ENCODE measurements at regions of chr3 and their contacts with region 1.

Region 1: DNA sequence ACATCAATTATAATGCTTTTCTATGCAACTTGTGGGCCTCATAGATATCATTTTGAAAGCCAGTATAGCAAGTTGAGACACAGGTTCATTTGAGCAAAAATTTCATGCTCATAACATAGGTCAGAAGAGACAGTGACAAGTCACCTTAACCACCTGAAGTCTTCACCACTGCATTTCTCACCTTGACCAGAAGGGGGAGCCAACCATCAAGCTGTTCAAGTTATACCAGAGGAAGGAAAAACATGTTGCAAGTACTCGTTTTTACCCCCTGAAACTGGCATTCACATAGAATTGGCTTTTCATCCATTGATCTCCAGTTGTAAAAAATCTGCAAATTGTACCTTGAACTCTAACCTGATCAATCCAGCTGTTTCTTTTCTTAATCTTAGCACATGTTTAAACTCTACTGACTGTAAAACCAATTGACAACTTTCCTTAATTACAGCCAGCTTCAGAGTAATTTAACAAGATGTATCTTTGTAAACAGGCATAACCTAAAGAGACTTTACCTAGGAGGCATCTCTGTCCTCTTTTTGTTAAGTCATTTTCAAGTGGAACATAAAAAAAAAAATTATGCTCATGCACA is 1.4 kb downstream of the LMOD3 start:
- DNase-seq: peak; percentile 95
- H3K4me3 Mint-ChIP-seq: no peak overlapping the region
- H3K27ac Mint-ChIP-seq: no peak overlapping the region
- H3K4me1 Mint-ChIP-seq: peaks cover 3% of the 10 kb centered on the region
- H3K27me3 Mint-ChIP-seq: no peaks in the 10 kb centered on the region

Region 2: GRCh38 chr3:69425261-69425660 is 304.3 kb after region 1 on chr3:
- CTCF ChIA-PET with region 1: interaction called, 13 read pairs
- intact Hi-C with region 1: loop called (anchors 1 kb)
- DNase-seq: peak; percentile 57
- H3K4me3 Mint-ChIP-seq: no peak overlapping the region
- H3K27ac Mint-ChIP-seq: no peak overlapping the region
- H3K4me1 Mint-ChIP-seq: peaks cover 5% of the 10 kb centered on the region
- H3K27me3 Mint-ChIP-seq: no peaks in the 10 kb centered on the region

Region 3: GRCh38 chr3:69671082-69671952 is 550.3 kb after region 1 on chr3:
- CTCF ChIA-PET with region 1: interaction called, 4 read pairs
- intact Hi-C with region 1: loop called (anchors 1 kb)
- DNase-seq: peak; percentile 30
- H3K4me3 Mint-ChIP-seq: no peak overlapping the region
- H3K27ac Mint-ChIP-seq: no peak overlapping the region
- H3K4me1 Mint-ChIP-seq: no peaks in the 10 kb centered on the region
- H3K27me3 Mint-ChIP-seq: no peaks in the 10 kb centered on the region

Region 4: GRCh38 chr3:69948246-69948862 is 827.4 kb after region 1 on chr3:
- CTCF ChIA-PET with region 1: no interaction called
- intact Hi-C with region 1: loop called (anchors 2 kb)
- DNase-seq: no peak
- H3K4me3 Mint-ChIP-seq: no peak overlapping the region
- H3K27ac Mint-ChIP-seq: no peak overlapping the region
- H3K4me1 Mint-ChIP-seq: no peaks in the 10 kb centered on the region
- H3K27me3 Mint-ChIP-seq: no peaks in the 10 kb centered on the region